GM10248 (cell line): ENCODE measurements at regions of chr5 and their contacts with region 1.

Region 1: GRCh38 chr5:100600298-100600994 is 65.3 kb downstream of the FAM174A start:
- DNase-seq: no peak
- CTCF ChIP-seq: no peak

Region 2: DNA sequence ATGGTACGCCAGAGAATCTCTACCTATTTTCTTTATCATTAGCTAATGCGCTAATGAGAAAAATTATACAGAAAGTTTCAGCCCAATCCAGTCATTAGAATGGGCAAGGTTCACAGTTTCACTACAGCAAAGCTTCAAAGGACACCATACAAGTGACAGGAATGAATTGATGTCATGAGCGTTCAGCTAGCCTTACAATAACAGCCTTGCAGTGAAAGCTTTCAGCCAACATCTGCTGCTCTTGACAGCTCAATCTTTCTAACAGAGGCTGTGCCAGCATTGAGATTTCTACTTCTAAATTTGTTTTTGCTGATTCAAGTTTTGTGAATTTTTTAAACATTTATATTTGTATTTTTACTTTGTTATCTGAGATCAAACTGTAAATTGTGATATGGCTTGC is 367.7 kb before region 1 on chr5:
- CTCF ChIA-PET with region 1: no interaction called
- POLR2A ChIA-PET with region 1: no interaction called
- DNase-seq: no peak
- CTCF ChIP-seq: no peak

Region 3: GRCh38 chr5:100423330-100423729 is 177.1 kb before region 1 on chr5:
- CTCF ChIA-PET with region 1: no interaction called
- POLR2A ChIA-PET with region 1: no interaction called
- DNase-seq: no peak
- CTCF ChIP-seq: no peak

Region 4: GRCh38 chr5:100584069-100584468 is 16.4 kb before region 1 on chr5:
- CTCF ChIA-PET with region 1: interaction called, 10 read pairs
- POLR2A ChIA-PET with region 1: no interaction called
- DNase-seq: peak; percentile 8
- CTCF ChIP-seq: no peak